CD8-positive, alpha-beta memory T cell (primary cell): ENCODE measurements at regions of chr11 and their contacts with region 1.

Region 1: DNA sequence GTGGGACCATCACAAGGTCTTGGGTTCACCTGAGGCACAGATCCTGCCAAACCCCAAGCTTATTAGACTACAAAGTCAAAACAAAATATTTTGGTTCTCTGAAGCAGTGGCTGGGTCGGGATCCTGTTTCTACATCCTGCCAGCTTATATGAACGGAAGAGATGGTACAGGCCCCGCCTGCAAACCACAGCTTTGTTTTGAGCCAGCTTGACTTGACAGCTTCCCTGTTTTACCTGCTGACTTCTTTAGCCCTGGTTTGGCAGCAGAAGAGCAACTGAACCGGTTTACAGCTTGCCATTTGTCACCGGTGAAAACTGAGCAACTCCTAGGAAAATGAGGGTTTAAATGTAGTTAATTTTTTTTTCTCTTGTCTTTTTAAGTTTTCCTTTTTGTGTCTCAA is 11.4 kb downstream of the PACS1 start:
- DNase-seq: peak; percentile 59 to 88 (median 74)
- H3K4me3 ChIP-seq: peak overlapping the region; percentile 37
- H3K4me3 Mint-ChIP-seq: peak overlapping the region; percentile 84 to 95 (median 93)
- H3K27ac ChIP-seq: peak overlapping the region; percentile 52
- H3K27ac Mint-ChIP-seq: peak overlapping the region; percentile 94 to 99 (median 99)
- H3K4me1 ChIP-seq: peaks cover 90% of the 10 kb centered on the region
- H3K4me1 Mint-ChIP-seq: peaks cover 83 to 90% (median 86%) of the 10 kb centered on the region in 3 donors
- H3K27me3 ChIP-seq: no peaks in the 10 kb centered on the region
- H3K27me3 Mint-ChIP-seq: peaks cover 0 to 2% of the 10 kb centered on the region in 2 donors

Region 2: GRCh38 chr11:66100272-66101065 is 19.0 kb after region 1 on chr11:
- CTCF ChIA-PET with region 1: interaction called, 6 read pairs
- POLR2A ChIA-PET with region 1: interaction called, 10 read pairs
- DNase-seq: peak; percentile 51 to 81 (median 69)
- H3K4me3 ChIP-seq: peak overlapping the region; percentile 52
- H3K4me3 Mint-ChIP-seq: peak overlapping the region; percentile 77 to 91 (median 84)
- H3K27ac ChIP-seq: peak overlapping the region; percentile 8
- H3K27ac Mint-ChIP-seq: peak overlapping the region; percentile 71 to 100 (median 90)
- H3K4me1 ChIP-seq: peaks cover 57% of the 10 kb centered on the region
- H3K4me1 Mint-ChIP-seq: peaks cover 54 to 76% (median 67%) of the 10 kb centered on the region in 3 donors
- H3K27me3 ChIP-seq: no peaks in the 10 kb centered on the region
- H3K27me3 Mint-ChIP-seq: no peaks in the 10 kb centered on the region

Region 3: GRCh38 chr11:66136752-66137123 is 55.2 kb after region 1 on chr11:
- CTCF ChIA-PET with region 1: interaction called, 16 read pairs
- POLR2A ChIA-PET with region 1: no interaction called
- DNase-seq: no peak
- H3K4me3 ChIP-seq: no peak overlapping the region
- H3K4me3 Mint-ChIP-seq: no peak overlapping the region
- H3K27ac ChIP-seq: no peak overlapping the region
- H3K27ac Mint-ChIP-seq: peak overlapping the region in 7 of 8 donors; percentile 13 to 71 (median 50)
- H3K4me1 ChIP-seq: peaks cover 14% of the 10 kb centered on the region
- H3K4me1 Mint-ChIP-seq: peaks cover 45 to 70% (median 62%) of the 10 kb centered on the region in 3 donors
- H3K27me3 ChIP-seq: no peaks in the 10 kb centered on the region
- H3K27me3 Mint-ChIP-seq: peaks cover 0 to 1% of the 10 kb centered on the region in 2 donors